CD8-positive, alpha-beta memory T cell (primary cell): ENCODE measurements at regions of chr5 and their contacts with region 1.

Region 1: DNA sequence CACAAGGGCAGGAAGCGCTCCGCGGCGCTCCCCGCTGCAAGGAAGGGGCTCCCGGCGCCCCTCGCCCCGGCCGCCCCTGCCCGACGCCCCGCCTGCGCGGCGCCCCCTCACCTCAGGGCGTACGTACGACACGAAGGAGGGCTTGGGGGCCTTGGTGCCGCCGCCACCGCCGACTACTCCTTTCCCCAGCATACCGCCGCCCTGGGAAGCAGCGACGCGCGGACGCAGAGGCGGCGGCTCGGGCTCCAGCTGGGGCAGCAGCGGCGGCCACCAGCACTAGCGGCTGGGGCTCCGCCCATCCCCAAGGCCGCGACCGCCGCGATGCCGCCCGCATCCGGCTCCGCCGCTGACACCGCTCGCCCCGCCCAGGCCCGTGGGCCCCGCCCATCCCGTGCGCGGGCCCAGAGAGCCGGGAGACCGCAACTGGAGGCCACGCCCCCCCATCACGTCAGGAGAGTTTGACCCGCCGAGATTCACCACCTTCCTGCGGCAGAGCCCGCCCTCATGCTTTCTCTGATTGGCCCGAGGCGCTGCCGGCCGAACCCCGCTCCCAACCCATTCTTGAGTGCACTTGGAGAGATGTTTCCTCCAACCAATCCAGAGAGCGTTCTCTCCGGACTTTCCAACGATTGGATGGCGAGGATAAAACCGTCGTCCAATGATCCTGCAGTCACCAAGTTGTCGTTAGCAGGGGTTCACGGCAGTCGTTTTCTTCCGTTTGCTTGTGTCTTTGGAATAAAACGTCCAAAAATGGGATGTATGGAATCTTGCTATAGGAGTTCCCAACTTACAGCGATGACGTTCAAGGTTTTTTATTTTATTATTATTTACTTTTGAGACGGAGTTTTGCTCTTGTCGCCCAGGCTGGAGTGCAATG is at the start of gene MTMR12:
- DNase-seq: peak; percentile 99 to 100 (median 100)
- H3K4me3 ChIP-seq: peak within 1 kb of the TSS; percentile 71
- H3K4me3 Mint-ChIP-seq: peak within 1 kb of the TSS; percentile 92 to 100 (median 93)
- H3K27ac ChIP-seq: peak within 1 kb of the TSS; percentile 83
- H3K27ac Mint-ChIP-seq: peak within 1 kb of the TSS; percentile 92 to 98 (median 96)
- H3K4me1 ChIP-seq: peaks cover 18% of the 10 kb centered on the region
- H3K4me1 Mint-ChIP-seq: peaks cover 30 to 48% (median 43%) of the 10 kb centered on the region in 3 donors
- H3K27me3 ChIP-seq: no peaks in the 10 kb centered on the region
- H3K27me3 Mint-ChIP-seq: peaks cover 0 to 2% of the 10 kb centered on the region in 2 donors
- total RNA-seq, gene MTMR12: 25.4 to 27.4 TPM

Region 2: GRCh38 chr5:32174011-32174870 is 138.6 kb before region 1 on chr5 and contains the start of gene GOLPH3:
- CTCF ChIA-PET with region 1: no interaction called
- POLR2A ChIA-PET with region 1: interaction called, 14 read pairs
- DNase-seq: peak; percentile 86 to 94 (median 88)
- H3K4me3 ChIP-seq: peak within 1 kb of the TSS; percentile 87
- H3K4me3 Mint-ChIP-seq: peak within 1 kb of the TSS; percentile 96 to 100 (median 99)
- H3K27ac ChIP-seq: peak within 1 kb of the TSS; percentile 94
- H3K27ac Mint-ChIP-seq: peak within 1 kb of the TSS; percentile 95 to 99 (median 98)
- H3K4me1 ChIP-seq: peaks cover 15% of the 10 kb centered on the region
- H3K4me1 Mint-ChIP-seq: peaks cover 36 to 39% (median 38%) of the 10 kb centered on the region in 3 donors
- H3K27me3 ChIP-seq: no peaks in the 10 kb centered on the region
- H3K27me3 Mint-ChIP-seq: peaks cover 2 to 6% of the 10 kb centered on the region in 2 donors
- total RNA-seq, gene GOLPH3: 109 to 110 TPM